Esophagus muscularis mucosa (tissue), 4 donors: ENCODE measurements at regions of chr16 and their contacts with region 1.

Region 1: GRCh38 chr16:55465077-55465896 is 13.7 kb upstream of the MMP2 start:
- DNase-seq: peak; percentile 97
- H3K4me3 ChIP-seq: peak overlapping the region in 1 of 4 donors; percentile 18
- H3K27ac ChIP-seq: no peak overlapping the region
- H3K4me1 ChIP-seq: peaks cover 0 to 6% (median under 1%) of the 10 kb centered on the region in 4 donors
- H3K27me3 ChIP-seq: peaks cover 0 to 22% (median 1%) of the 10 kb centered on the region in 4 donors
- CTCF ChIP-seq: peak; percentile 100
- EP300 ChIP-seq: no peak
- POLR2A ChIP-seq: no peak

Region 2: GRCh38 chr16:55543472-55543871 is 78.2 kb after region 1 on chr16:
- intact Hi-C with region 1: loop called (anchors 2 kb)
- DNase-seq: no peak
- H3K4me3 ChIP-seq: no peak overlapping the region
- H3K27ac ChIP-seq: no peak overlapping the region
- H3K4me1 ChIP-seq: peaks cover 0 to 5% (median 0%) of the 10 kb centered on the region in 4 donors
- H3K27me3 ChIP-seq: no peaks in the 10 kb centered on the region
- CTCF ChIP-seq: peak; percentile 33 to 42 (median 35)
- EP300 ChIP-seq: no peak
- POLR2A ChIP-seq: no peak

Region 3: GRCh38 chr16:55701442-55702319 is 236.4 kb after region 1 on chr16:
- intact Hi-C with region 1: loop called (anchors 2 kb)
- DNase-seq: no peak
- H3K4me3 ChIP-seq: no peak overlapping the region
- H3K27ac ChIP-seq: no peak overlapping the region
- H3K4me1 ChIP-seq: peaks cover 0 to 14% (median 6%) of the 10 kb centered on the region in 4 donors
- H3K27me3 ChIP-seq: peaks cover 0 to 13% (median 0%) of the 10 kb centered on the region in 4 donors
- CTCF ChIP-seq: peak; percentile 56 to 66 (median 58)
- EP300 ChIP-seq: no peak
- POLR2A ChIP-seq: no peak

Region 4: DNA sequence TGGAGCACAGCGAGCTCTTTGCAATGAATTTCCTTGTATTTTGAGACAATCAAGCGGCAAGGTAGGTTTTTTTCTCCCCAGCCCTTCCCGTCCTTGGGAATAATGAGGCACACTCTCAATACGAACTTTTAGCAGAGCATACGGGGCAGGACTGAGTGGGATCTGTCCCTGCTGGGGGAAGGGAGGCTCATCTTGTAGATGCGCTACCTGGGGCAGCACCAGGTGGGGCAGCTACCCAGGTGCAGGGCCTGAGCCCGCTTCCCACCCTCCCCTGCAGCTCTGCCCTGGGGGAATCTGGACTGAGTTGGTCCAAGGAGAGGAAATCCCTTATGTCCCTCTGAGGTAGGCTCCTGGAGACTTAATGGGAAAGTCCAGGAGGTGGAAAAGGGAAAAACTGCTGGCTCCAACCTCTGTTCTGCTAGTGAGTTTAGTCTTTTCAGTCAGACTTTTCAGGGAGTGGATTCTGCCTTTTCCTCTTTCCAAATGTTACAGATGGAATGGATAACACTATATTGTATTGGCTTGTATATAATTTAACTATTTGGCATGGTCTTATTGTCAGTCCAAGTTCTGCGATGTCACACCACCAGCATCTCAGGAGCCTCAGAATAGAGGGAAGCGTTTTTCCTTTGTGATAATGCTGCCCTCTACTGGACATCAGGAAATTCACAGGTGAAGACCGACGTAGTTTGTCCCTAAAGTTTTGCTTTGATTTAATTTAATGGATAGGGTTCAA is 377.2 kb after region 1 on chr16:
- intact Hi-C with region 1: loop called (anchors 5 kb)
- DNase-seq: no peak
- H3K4me3 ChIP-seq: no peak overlapping the region
- H3K27ac ChIP-seq: no peak overlapping the region
- H3K4me1 ChIP-seq: no peaks in the 10 kb centered on the region
- H3K27me3 ChIP-seq: peaks cover 0 to 38% (median 3%) of the 10 kb centered on the region in 4 donors
- CTCF ChIP-seq: peak; percentile 78 to 82 (median 80)
- EP300 ChIP-seq: no peak
- POLR2A ChIP-seq: no peak